ENCODE measurements at regions of chr6 and their contacts with region 1.

Region 1: GRCh38 chr6:108896111-108896661 is 48.0 kb downstream of the ARMC2 start:
- DNase-seq: no peak
- H3K4me3 Mint-ChIP-seq: peak overlapping the region; percentile 45
- H3K27ac Mint-ChIP-seq: peak overlapping the region; percentile 93
- H3K4me1 Mint-ChIP-seq: peaks cover 53% of the 10 kb centered on the region
- H3K27me3 Mint-ChIP-seq: peaks cover 1% of the 10 kb centered on the region

Region 2: GRCh38 chr6:108541838-108542759 is 354.1 kb before region 1 on chr6:
- CTCF ChIA-PET with region 1: interaction called, 30 read pairs
- POLR2A ChIA-PET with region 1: no interaction called
- DNase-seq: peak; percentile 78
- H3K4me3 Mint-ChIP-seq: peak overlapping the region; percentile 40
- H3K27ac Mint-ChIP-seq: no peak overlapping the region
- H3K4me1 Mint-ChIP-seq: peaks cover 23% of the 10 kb centered on the region
- H3K27me3 Mint-ChIP-seq: peaks cover 18% of the 10 kb centered on the region

Region 3: DNA sequence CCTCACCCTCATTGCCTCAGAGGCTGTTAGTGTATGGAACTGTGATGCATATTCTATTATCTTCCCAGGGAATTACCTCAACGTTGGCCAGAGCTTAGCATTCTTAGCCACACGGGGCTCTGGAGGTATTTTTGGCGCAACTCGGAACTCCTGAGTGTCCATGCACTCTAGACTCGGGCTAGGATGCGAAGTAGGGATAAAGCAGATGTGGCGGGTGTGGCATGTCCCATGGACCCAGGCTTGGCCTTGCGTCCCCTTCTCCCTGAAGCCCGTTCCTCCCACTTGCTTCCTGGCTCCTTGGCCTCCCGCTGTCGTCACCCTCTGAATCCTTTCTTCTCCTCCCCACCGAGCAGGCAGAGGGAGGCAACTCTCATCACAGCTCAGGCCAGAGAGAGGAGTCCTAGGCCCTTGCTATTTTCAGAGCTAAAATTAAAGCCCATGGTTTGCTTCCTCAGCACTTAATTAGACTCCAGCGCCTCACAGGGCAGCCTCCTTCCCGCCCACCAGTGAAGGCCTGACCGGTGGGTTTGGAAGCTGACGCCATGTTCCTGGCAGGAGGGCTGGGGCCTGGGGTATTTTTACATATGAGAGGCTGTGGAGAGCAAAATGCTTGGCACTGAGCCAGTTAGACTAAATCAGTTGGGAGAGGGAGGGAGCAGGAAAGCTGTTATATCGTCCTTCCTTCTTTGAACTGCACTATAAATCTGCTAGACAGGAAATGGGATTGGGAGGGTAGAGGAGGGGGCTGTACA is 196.7 kb before region 1 on chr6:
- CTCF ChIA-PET with region 1: no interaction called
- POLR2A ChIA-PET with region 1: no interaction called
- DNase-seq: no peak
- H3K4me3 Mint-ChIP-seq: no peak overlapping the region
- H3K27ac Mint-ChIP-seq: no peak overlapping the region
- H3K4me1 Mint-ChIP-seq: peaks cover 7% of the 10 kb centered on the region
- H3K27me3 Mint-ChIP-seq: no peaks in the 10 kb centered on the region

Region 4: GRCh38 chr6:108848116-108848868 is 47.9 kb before region 1 on chr6 and contains the start of gene ARMC2:
- CTCF ChIA-PET with region 1: interaction called, 13 read pairs
- POLR2A ChIA-PET with region 1: interaction called, 5 read pairs
- DNase-seq: peak; percentile 89
- H3K4me3 Mint-ChIP-seq: peak within 1 kb of the TSS; percentile 77
- H3K27ac Mint-ChIP-seq: peak within 1 kb of the TSS; percentile 70
- H3K4me1 Mint-ChIP-seq: peaks cover 34% of the 10 kb centered on the region
- H3K27me3 Mint-ChIP-seq: no peaks in the 10 kb centered on the region
- total RNA-seq, gene ARMC2: 12.2 to 13.6 TPM

Region 5: DNA sequence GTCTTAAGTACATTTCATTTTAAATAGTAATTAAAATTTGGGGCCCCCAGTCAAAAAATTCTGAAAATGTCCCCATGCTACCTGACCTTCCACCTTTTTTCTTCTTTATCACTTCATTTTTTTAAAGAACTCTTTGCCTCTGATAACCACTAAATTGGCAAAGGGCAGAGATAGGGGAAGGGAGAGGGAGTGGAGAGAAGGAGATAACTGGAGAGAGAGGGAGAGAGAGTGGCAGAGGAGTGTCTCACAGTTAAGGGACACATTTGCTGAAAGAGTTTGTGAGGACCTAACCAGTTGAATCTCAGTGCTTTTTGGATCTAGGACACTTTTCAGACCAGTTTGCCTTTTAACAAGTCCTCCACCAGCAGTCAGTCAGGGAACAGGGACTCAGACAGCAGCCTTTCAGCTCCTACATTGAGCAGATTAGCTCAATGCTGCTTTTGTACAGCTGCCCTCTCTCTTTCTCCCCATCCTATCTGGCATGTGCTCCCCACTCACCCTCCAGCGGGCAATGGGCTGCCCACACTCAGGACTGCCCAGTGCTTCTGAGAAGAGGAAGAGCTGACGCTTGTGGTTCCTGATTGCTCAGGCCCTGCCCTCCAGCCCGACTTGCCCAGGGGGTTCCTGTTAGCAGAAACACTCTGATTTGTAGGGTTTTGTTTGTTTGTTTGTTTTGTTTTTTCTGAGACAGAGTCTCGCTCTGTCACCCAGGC is 33.6 kb before region 1 on chr6:
- CTCF ChIA-PET with region 1: interaction called, 13 read pairs
- POLR2A ChIA-PET with region 1: interaction called, 6 read pairs
- DNase-seq: no peak
- H3K4me3 Mint-ChIP-seq: no peak overlapping the region
- H3K27ac Mint-ChIP-seq: no peak overlapping the region
- H3K4me1 Mint-ChIP-seq: peaks cover 36% of the 10 kb centered on the region
- H3K27me3 Mint-ChIP-seq: no peaks in the 10 kb centered on the region

Region 6: GRCh38 chr6:108874470-108875160 is 21.6 kb before region 1 on chr6:
- CTCF ChIA-PET with region 1: interaction called, 32 read pairs
- POLR2A ChIA-PET with region 1: interaction called, 22 read pairs
- DNase-seq: peak; percentile 75
- H3K4me3 Mint-ChIP-seq: peak overlapping the region; percentile 75
- H3K27ac Mint-ChIP-seq: peak overlapping the region; percentile 100
- H3K4me1 Mint-ChIP-seq: peaks cover 74% of the 10 kb centered on the region
- H3K27me3 Mint-ChIP-seq: peaks cover 8% of the 10 kb centered on the region

Region 7: DNA sequence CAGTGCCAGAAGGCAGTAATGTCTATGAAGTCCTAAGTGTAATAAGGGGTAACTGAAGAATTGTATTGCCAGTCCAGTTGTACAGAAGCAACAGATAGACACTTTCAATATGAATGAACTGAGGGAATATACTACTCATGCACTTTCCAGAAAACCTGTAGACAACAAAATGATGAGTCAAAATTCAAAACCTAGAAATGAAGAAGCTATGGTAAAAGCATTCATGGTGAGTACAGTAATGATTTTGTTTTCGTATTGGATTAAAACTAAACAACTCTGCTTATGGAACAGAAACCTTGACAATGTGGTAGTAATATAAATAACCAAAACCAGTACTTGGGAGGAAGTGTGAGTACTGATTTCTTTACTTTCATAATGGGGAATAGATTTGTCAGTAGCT is 13.0 kb before region 1 on chr6:
- CTCF ChIA-PET with region 1: interaction called, 12 read pairs
- POLR2A ChIA-PET with region 1: interaction called, 3 read pairs
- DNase-seq: no peak
- H3K4me3 Mint-ChIP-seq: no peak overlapping the region
- H3K27ac Mint-ChIP-seq: peak overlapping the region; percentile 80
- H3K4me1 Mint-ChIP-seq: peaks cover 54% of the 10 kb centered on the region
- H3K27me3 Mint-ChIP-seq: peaks cover 10% of the 10 kb centered on the region